ENCODE measurements at regions of chr10 and their contacts with region 1.

Region 1: GRCh38 chr10:19917756-19918478 is 101.7 kb downstream of the PLXDC2 start:
- DNase-seq: no peak
- H3K4me3 ChIP-seq: no peak overlapping the region
- H3K27ac ChIP-seq: no peak overlapping the region
- H3K4me1 ChIP-seq: no peaks in the 10 kb centered on the region
- CTCF ChIP-seq: no peak

Region 2: DNA sequence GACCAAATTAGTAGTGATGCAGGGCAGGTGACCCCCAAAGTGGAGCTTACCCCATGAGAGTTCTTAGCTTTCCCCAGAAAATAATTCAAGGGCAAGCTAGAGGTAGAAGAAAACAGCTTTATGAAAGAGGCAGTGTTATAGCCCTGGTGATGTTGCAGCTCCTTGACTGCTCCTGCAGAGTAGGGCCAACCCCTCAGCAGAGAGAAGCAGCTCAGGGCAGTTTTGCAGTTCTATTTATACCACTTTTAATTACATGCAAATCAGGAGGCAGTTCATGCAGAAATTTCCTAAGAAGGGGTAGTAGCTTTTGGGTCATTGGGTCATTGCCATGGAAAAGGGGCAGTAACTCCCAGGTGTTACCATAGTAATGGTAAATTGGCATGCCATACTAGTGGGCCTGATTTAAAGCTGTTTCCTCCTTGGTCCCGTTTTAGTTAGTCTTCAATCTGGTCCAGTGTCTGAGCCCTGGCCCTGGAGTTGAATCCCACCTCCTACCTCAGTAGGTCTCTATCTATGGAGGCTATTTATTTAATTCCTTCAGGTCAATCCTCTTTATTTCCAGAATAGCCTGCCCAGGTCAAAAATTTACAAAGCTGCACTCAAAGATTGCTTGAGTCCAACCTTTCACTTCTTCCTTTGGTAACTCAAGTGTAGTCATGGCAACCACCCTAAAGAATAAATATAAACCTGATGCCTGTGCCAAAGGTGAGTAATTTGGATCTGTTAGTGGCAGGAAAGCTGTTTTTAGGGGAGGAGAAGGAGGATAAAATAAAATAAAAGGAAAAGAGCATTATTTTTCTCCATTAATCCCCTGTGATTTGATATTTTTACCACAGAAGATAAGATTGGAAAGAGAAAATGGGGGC is 72.2 kb before region 1 on chr10:
- CTCF ChIA-PET with region 1: no interaction called
- POLR2A ChIA-PET with region 1: no interaction called
- intact Hi-C with region 1: no loop called
- DNase-seq: no peak
- H3K4me3 ChIP-seq: no peak overlapping the region
- H3K27ac ChIP-seq: no peak overlapping the region
- H3K4me1 ChIP-seq: no peaks in the 10 kb centered on the region
- CTCF ChIP-seq: no peak

Region 3: DNA sequence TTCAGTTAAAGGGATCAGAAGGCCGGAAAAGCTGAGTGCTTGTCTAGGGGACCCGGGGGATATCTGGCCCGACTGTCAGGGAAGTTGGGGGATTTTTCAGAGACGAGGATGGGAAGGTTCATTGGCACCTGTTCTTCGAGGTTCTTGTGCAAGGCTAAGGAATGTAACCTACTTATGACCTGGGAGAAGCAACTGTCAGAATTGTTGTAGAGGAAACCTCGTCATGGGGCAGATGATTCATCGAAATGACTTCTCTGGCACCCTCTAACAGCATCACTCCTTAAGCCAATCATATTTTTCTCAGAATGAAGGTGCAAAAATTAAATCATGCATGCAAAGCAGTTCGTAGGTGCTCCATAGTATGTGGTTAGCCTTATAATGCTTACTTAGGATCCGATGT is 43.1 kb before region 1 on chr10:
- CTCF ChIA-PET with region 1: no interaction called
- POLR2A ChIA-PET with region 1: no interaction called
- intact Hi-C with region 1: no loop called
- DNase-seq: no peak
- H3K4me3 ChIP-seq: no peak overlapping the region
- H3K27ac ChIP-seq: no peak overlapping the region
- H3K4me1 ChIP-seq: no peaks in the 10 kb centered on the region
- CTCF ChIP-seq: no peak

Region 4: GRCh38 chr10:19930936-19931893 is 13.3 kb after region 1 on chr10:
- CTCF ChIA-PET with region 1: no interaction called
- POLR2A ChIA-PET with region 1: interaction called, 10 read pairs
- intact Hi-C with region 1: no loop called
- DNase-seq: peak; percentile 19
- H3K4me3 ChIP-seq: no peak overlapping the region
- H3K27ac ChIP-seq: no peak overlapping the region
- H3K4me1 ChIP-seq: no peaks in the 10 kb centered on the region
- CTCF ChIP-seq: no peak